GM10248 (cell line): ENCODE measurements at regions of chr12 and their contacts with region 1.

Region 1: DNA sequence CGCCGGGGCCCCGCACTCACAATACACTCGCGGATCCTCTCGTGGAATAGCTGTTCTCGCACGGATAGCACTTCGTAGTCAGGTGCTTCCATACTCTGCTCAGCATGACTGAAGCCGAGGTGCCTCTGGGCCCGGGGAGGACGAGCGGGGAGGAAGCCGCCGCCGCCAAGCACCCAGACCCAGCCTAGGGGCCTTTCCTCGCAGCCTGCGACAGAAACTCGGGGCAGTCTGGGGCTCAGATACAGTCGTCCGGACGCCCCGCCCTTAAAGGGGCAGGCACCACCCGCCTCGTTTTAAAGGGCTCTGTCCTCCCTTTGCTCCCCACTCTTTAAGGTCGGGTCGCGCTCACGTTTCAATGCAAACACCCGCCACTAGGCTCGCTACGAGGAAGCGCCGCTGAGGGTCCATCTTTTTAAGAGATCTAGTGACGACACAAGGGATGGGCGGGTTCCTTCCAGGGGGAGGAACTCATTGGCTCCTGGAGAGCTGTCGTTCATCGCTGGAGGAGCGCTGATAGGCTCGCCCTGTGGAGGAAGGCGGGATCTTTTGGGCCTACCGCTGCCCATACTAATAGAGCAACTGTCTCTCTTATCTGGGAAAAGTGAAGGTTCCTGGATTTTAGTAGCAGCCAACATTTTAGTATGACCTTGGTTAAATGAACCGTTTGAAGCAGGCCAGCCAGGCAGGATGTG is at the start of gene LMBR1L:
- DNase-seq: peak; percentile 99
- CTCF ChIP-seq: peak; percentile 9

Region 2: DNA sequence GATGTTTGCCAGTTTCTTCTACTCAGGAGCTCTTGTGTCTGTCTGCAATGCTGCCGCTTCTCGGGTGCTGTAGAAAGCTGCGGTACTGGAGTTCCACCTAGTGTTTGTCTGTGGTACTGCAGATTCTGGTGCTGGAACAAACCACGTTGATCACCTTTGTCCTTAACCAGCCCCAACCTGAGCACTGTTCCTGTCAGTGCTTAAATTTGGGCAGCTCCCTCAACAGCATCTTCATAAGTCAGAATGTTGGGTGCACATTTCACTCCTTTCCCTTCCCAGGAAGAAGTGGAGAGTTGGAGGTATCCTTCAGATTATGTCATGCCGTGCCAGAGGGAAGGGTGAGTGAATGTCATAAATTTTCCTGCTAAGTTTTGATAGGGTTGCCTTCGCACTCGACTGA is 492.1 kb before region 1 on chr12:
- CTCF ChIA-PET with region 1: no interaction called
- POLR2A ChIA-PET with region 1: no interaction called
- DNase-seq: peak; percentile 74
- CTCF ChIP-seq: peak; percentile 93

Region 3: DNA sequence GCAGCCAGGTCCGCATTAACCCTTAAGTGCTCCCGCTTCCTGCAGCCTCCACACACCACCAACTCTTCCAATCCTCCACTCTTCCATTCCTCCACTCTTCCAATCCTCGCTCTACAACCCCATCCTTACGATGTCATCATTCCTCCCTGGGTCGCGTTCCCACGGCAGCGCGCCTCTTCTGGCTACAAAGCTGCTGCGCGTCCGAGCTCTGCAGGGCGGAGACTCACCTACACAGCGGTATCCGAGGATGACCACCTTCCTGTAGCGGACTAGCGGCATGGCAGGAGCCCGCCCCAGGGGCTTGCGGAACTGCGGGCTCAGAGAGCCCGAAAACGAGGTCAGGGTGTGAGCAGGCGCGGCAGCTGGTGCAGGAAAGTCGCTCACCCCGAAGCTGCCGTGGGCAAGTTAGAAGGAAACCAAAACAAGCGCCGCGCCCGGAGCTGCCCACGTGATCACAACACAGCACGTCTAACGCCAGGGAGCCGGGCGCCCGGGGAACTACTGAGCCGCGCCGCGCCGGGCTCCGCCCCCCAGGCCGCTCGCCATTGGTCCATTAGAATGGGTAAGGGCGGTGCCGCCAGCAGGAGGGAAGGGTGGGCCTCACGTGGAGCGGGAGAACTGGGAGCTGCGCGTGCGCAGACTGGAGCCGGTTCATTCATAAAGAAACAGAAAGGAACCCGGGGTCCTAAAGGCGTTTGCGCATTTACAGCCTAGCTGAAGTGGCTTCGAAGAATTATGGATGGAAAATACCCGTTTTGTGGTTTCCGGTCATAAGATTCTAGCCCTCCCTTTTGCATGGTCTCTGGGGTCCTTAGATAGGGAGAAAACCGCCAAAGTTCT is 40.9 kb before region 1 on chr12 and contains the start of gene RHEBL1:
- CTCF ChIA-PET with region 1: interaction called, 184 read pairs
- POLR2A ChIA-PET with region 1: interaction called, 4 read pairs
- DNase-seq: peak; percentile 99
- CTCF ChIP-seq: peak; percentile 21

Region 4: DNA sequence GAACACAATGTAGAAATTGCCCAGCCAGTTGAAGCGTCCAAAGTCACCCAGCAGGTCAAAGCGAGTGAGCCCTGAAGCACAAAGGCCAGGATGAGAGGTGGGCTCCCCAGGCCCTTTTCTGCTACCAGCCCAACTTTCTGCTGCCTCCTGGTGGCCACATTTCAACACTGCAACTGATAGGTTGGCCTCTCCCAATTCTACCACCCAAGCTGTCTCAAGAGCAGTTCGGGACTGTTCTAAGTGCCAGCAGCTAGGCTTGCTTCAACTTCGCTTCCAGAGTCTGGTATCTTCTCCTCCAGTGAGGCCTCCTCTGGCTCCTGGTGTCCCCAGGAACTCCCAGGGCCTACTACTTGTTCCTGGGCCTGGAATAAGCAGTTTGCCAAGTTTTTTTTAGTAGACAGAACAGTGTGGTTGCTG is 12.6 kb before region 1 on chr12:
- CTCF ChIA-PET with region 1: interaction called, 206 read pairs
- POLR2A ChIA-PET with region 1: interaction called, 8 read pairs
- DNase-seq: peak; percentile 69
- CTCF ChIP-seq: peak; percentile 72